ENCODE measurements at regions of chr19 and their contacts with region 1.

Region 1: GRCh38 chr19:56066152-56067023 is 54.7 kb downstream of the ZNF787 start:
- DNase-seq: peak; percentile 74 to 82 (median 80)
- ATAC-seq: peak; percentile 91
- H3K4me3 ChIP-seq: no peak overlapping the region
- H3K27ac ChIP-seq: no peak overlapping the region
- H3K4me1 ChIP-seq: peaks cover 8% of the 10 kb centered on the region
- H3K27me3 ChIP-seq: no peaks in the 10 kb centered on the region
- CTCF ChIP-seq: peak; percentile 78 to 96 (median 86)
- POLR2A ChIP-seq: no peak

Region 2: GRCh38 chr19:55993492-55993891 is 72.9 kb before region 1 on chr19:
- intact Hi-C with region 1: no loop called
- DNase-seq: no peak
- ATAC-seq: no peak
- H3K4me3 ChIP-seq: no peak overlapping the region
- H3K27ac ChIP-seq: no peak overlapping the region
- H3K4me1 ChIP-seq: no peaks in the 10 kb centered on the region
- H3K27me3 ChIP-seq: no peaks in the 10 kb centered on the region
- CTCF ChIP-seq: no peak
- POLR2A ChIP-seq: no peak

Region 3: GRCh38 chr19:56350416-56351045 is 284.1 kb after region 1 on chr19:
- intact Hi-C with region 1: loop called (anchors 10 kb)
- DNase-seq: peak; percentile 45 to 61 (median 54)
- ATAC-seq: no peak
- H3K4me3 ChIP-seq: no peak overlapping the region
- H3K27ac ChIP-seq: no peak overlapping the region
- H3K4me1 ChIP-seq: no peaks in the 10 kb centered on the region
- H3K27me3 ChIP-seq: no peaks in the 10 kb centered on the region
- CTCF ChIP-seq: peak; percentile 44 to 81 (median 70)
- POLR2A ChIP-seq: no peak

Region 4: GRCh38 chr19:56567274-56568120 is 501.1 kb after region 1 on chr19 and contains the start of gene ZNF470:
- intact Hi-C with region 1: no loop called
- DNase-seq: peak; percentile 95 to 97 (median 96)
- ATAC-seq: peak; percentile 97
- H3K4me3 ChIP-seq: peak within 1 kb of the TSS; percentile 87 to 98
- H3K27ac ChIP-seq: peak within 1 kb of the TSS; percentile 34 to 90 (median 57)
- H3K4me1 ChIP-seq: peaks cover 16% of the 10 kb centered on the region
- H3K27me3 ChIP-seq: no peaks in the 10 kb centered on the region
- CTCF ChIP-seq: no peak
- POLR2A ChIP-seq: peak; percentile 13 to 66 (median 65)
- total RNA-seq, gene ZNF470: 1.3 to 3.1 TPM

Measured in body of pancreas (tissue), 4 donors.